Testis (tissue), 5 donors: ENCODE measurements at regions of chr14 and their contacts with region 1.

Region 1: DNA sequence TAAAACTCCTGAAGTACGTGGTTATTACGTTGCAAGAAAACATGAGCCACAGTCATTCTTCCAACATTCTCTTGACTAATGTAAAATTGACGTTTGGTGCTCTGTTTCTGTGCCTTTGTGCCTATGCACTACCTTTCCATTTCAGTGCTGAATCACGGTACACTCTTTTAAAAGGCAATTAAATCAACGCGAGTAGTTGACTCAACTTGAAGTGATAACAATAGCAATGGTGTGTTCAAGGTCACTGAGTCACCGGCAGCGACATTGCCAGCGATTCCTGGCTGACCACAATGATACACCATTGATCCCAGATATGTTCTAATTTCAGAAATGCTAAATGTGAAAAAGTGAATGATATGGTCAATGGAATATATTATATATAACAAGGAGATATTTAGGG is 17.8 kb downstream of the AK7 start:
- DNase-seq: no peak
- H3K4me3 ChIP-seq: no peak overlapping the region
- H3K27ac ChIP-seq: no peak overlapping the region
- H3K4me1 ChIP-seq: no peaks in the 10 kb centered on the region
- H3K27me3 ChIP-seq: no peaks in the 10 kb centered on the region
- CTCF ChIP-seq: no peak
- POLR2A ChIP-seq: no peak

Region 2: GRCh38 chr14:96281486-96281885 is 128.2 kb before region 1 on chr14:
- intact Hi-C with region 1: loop called (anchors 10 kb)
- DNase-seq: no peak
- H3K4me3 ChIP-seq: no peak overlapping the region
- H3K27ac ChIP-seq: no peak overlapping the region
- H3K4me1 ChIP-seq: no peaks in the 10 kb centered on the region
- H3K27me3 ChIP-seq: no peaks in the 10 kb centered on the region
- CTCF ChIP-seq: no peak
- POLR2A ChIP-seq: no peak